CD4-positive, alpha-beta memory T cell (primary cell): ENCODE measurements at regions of chr7 and their contacts with region 1.

Region 1: GRCh38 chr7:37284805-37285231 is 163.8 kb downstream of the ELMO1 start:
- DNase-seq: peak in 4 of 5 donors; percentile 17 to 43 (median 28)
- H3K4me3 ChIP-seq: no peak overlapping the region
- H3K4me3 Mint-ChIP-seq: no peak overlapping the region
- H3K27ac ChIP-seq: no peak overlapping the region
- H3K27ac Mint-ChIP-seq: peak overlapping the region in 5 of 7 donors; percentile 47 to 81 (median 71)
- H3K4me1 ChIP-seq: peaks cover 28% of the 10 kb centered on the region
- H3K4me1 Mint-ChIP-seq: peaks cover 38 to 57% (median 51%) of the 10 kb centered on the region in 4 donors
- H3K27me3 ChIP-seq: no peaks in the 10 kb centered on the region
- H3K27me3 Mint-ChIP-seq: no peaks in the 10 kb centered on the region

Region 2: GRCh38 chr7:37007268-37007667 is 277.6 kb before region 1 on chr7:
- CTCF ChIA-PET with region 1: no interaction called
- POLR2A ChIA-PET with region 1: no interaction called
- intact Hi-C with region 1: no loop called
- DNase-seq: no peak
- H3K4me3 ChIP-seq: no peak overlapping the region
- H3K4me3 Mint-ChIP-seq: no peak overlapping the region
- H3K27ac ChIP-seq: no peak overlapping the region
- H3K27ac Mint-ChIP-seq: peak overlapping the region in 3 of 7 donors; percentile 7 to 75 (median 46)
- H3K4me1 ChIP-seq: no peaks in the 10 kb centered on the region
- H3K4me1 Mint-ChIP-seq: peaks cover 0 to 13% (median 5%) of the 10 kb centered on the region in 4 donors
- H3K27me3 ChIP-seq: no peaks in the 10 kb centered on the region
- H3K27me3 Mint-ChIP-seq: no peaks in the 10 kb centered on the region

Region 3: GRCh38 chr7:37234928-37235327 is 49.9 kb before region 1 on chr7:
- CTCF ChIA-PET with region 1: interaction called, 11 read pairs
- POLR2A ChIA-PET with region 1: no interaction called
- intact Hi-C with region 1: no loop called
- DNase-seq: peak; percentile 11 to 39 (median 24)
- H3K4me3 ChIP-seq: no peak overlapping the region
- H3K4me3 Mint-ChIP-seq: no peak overlapping the region
- H3K27ac ChIP-seq: no peak overlapping the region
- H3K27ac Mint-ChIP-seq: peak overlapping the region in 3 of 7 donors; percentile 37 to 77 (median 51)
- H3K4me1 ChIP-seq: peaks cover 16% of the 10 kb centered on the region
- H3K4me1 Mint-ChIP-seq: peaks cover 23 to 33% (median 28%) of the 10 kb centered on the region in 4 donors
- H3K27me3 ChIP-seq: no peaks in the 10 kb centered on the region
- H3K27me3 Mint-ChIP-seq: no peaks in the 10 kb centered on the region

Region 4: DNA sequence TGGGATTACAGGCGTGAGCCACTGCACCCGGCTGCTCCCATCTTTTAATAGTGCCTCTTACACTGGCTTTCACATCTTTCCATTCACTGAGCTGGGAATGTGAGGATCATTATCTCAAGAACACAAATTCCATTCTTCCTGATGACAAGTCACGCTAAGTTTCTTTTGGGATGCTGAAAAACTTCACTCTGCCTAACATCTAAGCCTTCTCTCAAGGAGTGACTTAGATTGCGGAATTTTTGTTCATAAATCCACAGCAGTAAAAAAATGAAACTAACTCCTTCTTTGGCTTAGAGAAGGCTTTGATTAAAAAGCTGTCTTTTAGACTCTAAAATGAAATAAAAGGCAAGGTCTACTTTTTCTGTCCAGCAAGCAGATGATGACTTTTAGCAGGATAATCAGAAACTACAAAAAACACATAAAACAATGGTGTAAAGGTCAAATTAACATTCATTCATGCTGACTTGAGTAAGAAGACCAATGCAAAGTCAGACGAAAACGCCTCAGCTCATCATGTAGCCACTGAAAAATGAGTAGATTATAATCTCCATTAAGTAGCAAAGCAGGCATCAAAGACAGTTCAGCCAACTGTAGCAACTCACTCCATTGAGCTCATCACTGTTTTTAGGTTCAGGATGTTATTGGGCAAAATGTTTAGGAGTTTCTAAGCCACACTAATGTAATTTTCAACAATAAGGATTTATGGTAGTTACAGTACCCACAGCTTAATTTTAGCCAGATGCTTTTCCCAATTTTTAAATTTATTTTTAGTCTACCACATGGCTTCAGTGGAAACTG is 14.9 kb before region 1 on chr7:
- CTCF ChIA-PET with region 1: interaction called, 23 read pairs
- POLR2A ChIA-PET with region 1: no interaction called
- intact Hi-C with region 1: no loop called
- DNase-seq: no peak
- H3K4me3 ChIP-seq: no peak overlapping the region
- H3K4me3 Mint-ChIP-seq: no peak overlapping the region
- H3K27ac ChIP-seq: no peak overlapping the region
- H3K27ac Mint-ChIP-seq: no peak overlapping the region
- H3K4me1 ChIP-seq: peaks cover 20% of the 10 kb centered on the region
- H3K4me1 Mint-ChIP-seq: peaks cover 28 to 42% (median 36%) of the 10 kb centered on the region in 4 donors
- H3K27me3 ChIP-seq: no peaks in the 10 kb centered on the region
- H3K27me3 Mint-ChIP-seq: no peaks in the 10 kb centered on the region

Region 5: DNA sequence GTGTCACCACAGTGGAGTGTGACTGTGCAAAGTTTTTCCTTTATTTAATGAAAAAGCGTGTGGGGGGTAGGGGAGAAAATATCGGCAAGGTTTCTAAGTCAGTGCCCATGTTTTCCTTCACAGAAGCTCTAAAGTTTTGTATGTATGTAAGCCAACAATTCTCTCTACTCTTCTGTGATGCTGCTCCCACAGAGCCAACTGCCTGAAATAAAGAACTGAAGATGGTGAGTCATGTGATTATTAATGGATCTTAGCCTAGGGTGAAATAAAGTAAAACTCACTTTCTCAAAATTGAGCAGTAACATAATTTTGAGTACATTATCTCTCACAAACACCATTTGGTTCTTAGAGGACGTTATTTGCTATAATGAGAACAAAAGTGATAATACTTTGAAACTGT is 20.1 kb after region 1 on chr7:
- CTCF ChIA-PET with region 1: interaction called, 18 read pairs
- POLR2A ChIA-PET with region 1: interaction called, 14 read pairs
- intact Hi-C with region 1: no loop called
- DNase-seq: no peak
- H3K4me3 ChIP-seq: no peak overlapping the region
- H3K4me3 Mint-ChIP-seq: no peak overlapping the region
- H3K27ac ChIP-seq: no peak overlapping the region
- H3K27ac Mint-ChIP-seq: no peak overlapping the region
- H3K4me1 ChIP-seq: peaks cover 9% of the 10 kb centered on the region
- H3K4me1 Mint-ChIP-seq: peaks cover 25 to 53% (median 35%) of the 10 kb centered on the region in 4 donors
- H3K27me3 ChIP-seq: no peaks in the 10 kb centered on the region
- H3K27me3 Mint-ChIP-seq: no peaks in the 10 kb centered on the region

Region 6: GRCh38 chr7:37311355-37311754 is 26.5 kb after region 1 on chr7:
- CTCF ChIA-PET with region 1: interaction called, 18 read pairs
- POLR2A ChIA-PET with region 1: interaction called, 14 read pairs
- intact Hi-C with region 1: no loop called
- DNase-seq: peak; percentile 47 to 66 (median 61)
- H3K4me3 ChIP-seq: no peak overlapping the region
- H3K4me3 Mint-ChIP-seq: peak overlapping the region in 7 of 8 donors; percentile 44 to 87 (median 75)
- H3K27ac ChIP-seq: peak overlapping the region; percentile 54
- H3K27ac Mint-ChIP-seq: peak overlapping the region; percentile 95 to 99 (median 98)
- H3K4me1 ChIP-seq: peaks cover 53% of the 10 kb centered on the region
- H3K4me1 Mint-ChIP-seq: peaks cover 57 to 89% (median 71%) of the 10 kb centered on the region in 4 donors
- H3K27me3 ChIP-seq: no peaks in the 10 kb centered on the region
- H3K27me3 Mint-ChIP-seq: no peaks in the 10 kb centered on the region

Region 7: DNA sequence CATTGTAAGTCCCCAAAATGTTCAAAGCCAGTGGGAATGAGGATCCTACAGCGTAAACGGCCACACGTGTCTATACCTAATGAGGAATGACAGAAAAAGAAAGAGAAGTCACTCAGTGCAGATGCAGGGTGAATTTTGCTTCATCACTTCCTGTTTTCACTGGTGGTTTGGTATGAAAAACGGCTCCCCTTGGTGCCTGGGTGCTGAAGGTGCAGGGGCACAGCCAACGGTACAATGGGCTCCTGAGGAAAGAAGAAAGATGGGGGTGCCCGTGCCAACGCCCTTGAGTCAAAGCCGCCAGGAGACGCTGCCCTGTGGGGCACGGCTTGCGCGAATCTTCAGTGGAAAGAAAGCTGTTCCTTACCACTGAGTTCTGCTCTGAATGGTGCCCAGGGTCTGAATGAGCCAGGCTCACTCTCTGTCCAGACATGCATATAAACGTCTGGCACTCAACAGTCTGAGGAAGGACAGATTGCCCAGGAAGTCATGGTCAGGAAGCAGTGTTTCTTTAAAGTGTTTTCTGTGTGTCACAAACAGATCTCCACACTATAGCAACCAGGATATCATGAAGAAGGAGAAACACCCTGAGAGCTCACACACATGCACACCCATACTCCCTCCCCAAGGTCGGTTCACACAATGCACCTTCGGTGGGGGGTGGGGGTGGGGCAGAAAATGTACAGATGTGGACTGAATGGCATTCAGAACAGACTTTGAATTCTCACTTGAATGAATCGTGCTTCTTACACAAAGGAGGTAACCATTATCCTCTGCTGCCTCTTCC is 58.1 kb after region 1 on chr7:
- CTCF ChIA-PET with region 1: interaction called, 64 read pairs
- POLR2A ChIA-PET with region 1: interaction called, 7 read pairs
- intact Hi-C with region 1: loop called (anchors 1 kb)
- DNase-seq: peak; percentile 75 to 89 (median 79)
- H3K4me3 ChIP-seq: peak overlapping the region; percentile 39 to 70
- H3K4me3 Mint-ChIP-seq: peak overlapping the region; percentile 92 to 99 (median 96)
- H3K27ac ChIP-seq: peak overlapping the region; percentile 75
- H3K27ac Mint-ChIP-seq: peak overlapping the region; percentile 92 to 98 (median 98)
- H3K4me1 ChIP-seq: peaks cover 90% of the 10 kb centered on the region
- H3K4me1 Mint-ChIP-seq: peaks cover 54 to 89% (median 74%) of the 10 kb centered on the region in 4 donors
- H3K27me3 ChIP-seq: no peaks in the 10 kb centered on the region
- H3K27me3 Mint-ChIP-seq: no peaks in the 10 kb centered on the region

Region 8: DNA sequence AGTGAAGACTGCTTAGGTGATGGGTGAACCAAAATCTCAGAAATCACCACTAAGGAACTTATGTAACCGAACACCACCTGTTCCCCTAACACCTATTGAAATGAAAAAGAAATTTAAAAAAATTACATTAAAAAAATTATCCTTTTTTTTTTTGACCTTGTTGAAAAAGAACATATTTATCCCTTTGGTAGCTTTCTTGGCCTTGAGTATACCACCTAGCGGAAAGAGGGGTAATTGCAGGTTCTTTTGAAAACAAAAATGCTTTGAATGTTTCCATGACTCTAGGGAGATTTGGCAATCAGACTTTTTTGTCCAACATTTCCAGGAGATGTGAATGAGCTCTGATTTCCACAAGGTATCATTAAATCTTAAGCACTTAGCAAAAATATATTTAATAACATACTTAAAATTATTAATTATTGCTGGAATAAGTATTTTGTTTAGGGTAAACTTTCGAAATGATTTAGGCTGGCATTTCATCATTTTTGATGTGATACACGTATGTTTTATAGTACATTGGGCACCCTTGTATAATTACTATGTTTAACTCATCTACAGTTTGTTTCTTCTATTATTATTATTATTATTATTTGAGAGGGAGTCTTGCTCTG is 210.9 kb after region 1 on chr7:
- CTCF ChIA-PET with region 1: interaction called, 41 read pairs
- POLR2A ChIA-PET with region 1: no interaction called
- intact Hi-C with region 1: loop called (anchors 1 kb)
- DNase-seq: peak in 4 of 5 donors; percentile 25 to 43 (median 38)
- H3K4me3 ChIP-seq: no peak overlapping the region
- H3K4me3 Mint-ChIP-seq: no peak overlapping the region
- H3K27ac ChIP-seq: no peak overlapping the region
- H3K27ac Mint-ChIP-seq: no peak overlapping the region
- H3K4me1 ChIP-seq: no peaks in the 10 kb centered on the region
- H3K4me1 Mint-ChIP-seq: no peaks in the 10 kb centered on the region
- H3K27me3 ChIP-seq: no peaks in the 10 kb centered on the region
- H3K27me3 Mint-ChIP-seq: no peaks in the 10 kb centered on the region

Region 9: GRCh38 chr7:38368191-38368605 is 1083.4 kb after region 1 on chr7:
- CTCF ChIA-PET with region 1: no interaction called
- POLR2A ChIA-PET with region 1: no interaction called
- intact Hi-C with region 1: no loop called
- DNase-seq: peak; percentile 66 to 83 (median 75)
- H3K4me3 ChIP-seq: no peak overlapping the region
- H3K4me3 Mint-ChIP-seq: peak overlapping the region; percentile 21 to 82 (median 68)
- H3K27ac ChIP-seq: peak overlapping the region; percentile 59
- H3K27ac Mint-ChIP-seq: peak overlapping the region; percentile 78 to 94 (median 90)
- H3K4me1 ChIP-seq: peaks cover 73% of the 10 kb centered on the region
- H3K4me1 Mint-ChIP-seq: peaks cover 56 to 91% (median 66%) of the 10 kb centered on the region in 4 donors
- H3K27me3 ChIP-seq: no peaks in the 10 kb centered on the region
- H3K27me3 Mint-ChIP-seq: no peaks in the 10 kb centered on the region